ENCODE measurements at regions of chrX and their contacts with region 1.

Region 1: DNA sequence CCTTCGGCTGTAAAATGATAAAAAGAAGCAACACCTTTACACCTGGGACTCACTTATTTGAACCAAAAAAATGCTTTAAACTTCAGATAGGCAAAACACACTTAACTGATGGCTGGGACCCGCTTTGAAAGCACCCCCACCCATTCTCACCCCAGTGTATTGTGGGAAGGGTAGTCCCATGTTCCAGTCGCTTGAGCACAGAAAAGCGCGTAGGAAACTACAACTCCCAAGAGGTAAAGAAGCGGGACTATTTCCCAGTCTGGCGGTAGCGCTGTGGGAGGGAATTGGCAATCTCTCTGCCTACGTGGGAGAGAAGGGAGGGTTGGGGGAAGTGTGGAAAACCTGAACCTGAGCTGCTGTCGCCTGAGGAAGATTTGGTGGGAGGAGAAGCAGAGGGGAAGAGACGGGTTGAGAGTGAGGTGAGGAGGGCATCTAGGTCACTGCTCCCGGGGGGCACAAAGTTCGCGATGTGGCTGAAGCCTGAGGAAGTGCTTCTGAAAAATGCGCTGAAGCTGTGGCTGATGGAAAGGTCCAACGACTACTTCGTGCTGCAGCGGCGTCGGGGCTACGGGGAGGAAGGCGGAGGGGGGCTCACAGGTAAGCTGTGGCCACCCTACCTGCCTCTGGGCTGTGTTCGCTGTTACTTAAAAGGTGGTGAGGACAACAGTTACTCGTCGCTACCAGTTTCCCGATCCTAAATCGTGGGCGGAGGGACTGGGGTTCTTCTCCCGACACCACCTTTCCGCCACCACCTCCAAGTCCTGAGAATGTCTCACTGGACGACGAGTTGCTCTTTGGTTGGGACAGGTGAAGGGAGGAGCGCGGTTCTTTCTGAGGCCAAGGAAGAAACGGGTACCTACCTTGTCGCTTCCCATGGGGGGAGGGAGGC is at the start of gene TBC1D8B:
- DNase-seq: peak; percentile 89
- H3K4me3 ChIP-seq: peak within 1 kb of the TSS; percentile 44 to 67 (median 61)
- H3K27ac ChIP-seq: peak within 1 kb of the TSS; percentile 40 to 56 (median 48)
- H3K4me1 ChIP-seq: no peaks in the 10 kb centered on the region
- H3K27me3 ChIP-seq: no peaks in the 10 kb centered on the region
- CTCF ChIP-seq: no peak
- EP300 ChIP-seq: no peak
- POLR2A ChIP-seq: no peak
- total RNA-seq, gene TBC1D8B: 4.5 to 9.4 (median 5.7) TPM

Region 2: DNA sequence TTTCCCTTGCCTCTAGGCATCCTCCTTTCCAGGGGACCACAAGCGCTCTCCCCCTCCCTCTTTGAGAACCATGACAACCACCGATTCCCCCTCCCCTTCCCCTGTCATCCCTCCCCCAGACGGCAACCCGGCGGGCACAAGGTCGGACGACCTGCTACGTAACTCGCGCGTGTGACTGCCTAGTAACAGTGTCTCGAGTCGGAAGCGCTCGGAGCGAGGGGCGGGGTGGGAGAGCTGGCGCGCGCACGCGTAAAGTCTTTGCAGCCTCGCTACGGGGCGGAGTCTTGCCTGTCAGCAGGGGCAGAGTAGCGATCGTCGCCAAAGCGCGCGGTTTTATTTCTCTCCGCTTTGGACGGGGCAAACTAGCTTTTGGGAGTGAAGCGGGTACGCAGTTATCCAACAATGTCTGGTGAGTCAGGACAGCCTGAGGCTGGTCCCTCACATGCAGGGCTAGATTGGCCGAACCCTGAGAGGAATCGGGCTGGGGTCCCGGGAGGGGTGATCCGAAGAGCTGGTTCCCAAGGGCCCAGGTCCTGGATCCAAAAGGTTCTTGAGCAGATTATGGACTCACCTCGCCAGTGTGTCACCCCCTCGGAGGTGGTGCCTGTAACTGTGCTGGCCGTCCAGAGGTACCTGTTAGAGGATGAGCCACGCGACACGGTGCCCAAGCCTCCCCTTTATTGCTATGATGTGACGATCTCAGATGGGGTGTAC is 190.8 kb before region 1 on chrX and contains the start of gene RADX:
- intact Hi-C with region 1: loop called (anchors 5 kb)
- DNase-seq: peak; percentile 88
- H3K4me3 ChIP-seq: peak within 1 kb of the TSS; percentile 33 to 57 (median 52)
- H3K27ac ChIP-seq: peak within 1 kb of the TSS in 3 of 4 donors; percentile 42 to 48 (median 45)
- H3K4me1 ChIP-seq: peaks cover 0 to 4% (median 0%) of the 10 kb centered on the region in 4 donors
- H3K27me3 ChIP-seq: no peaks in the 10 kb centered on the region
- CTCF ChIP-seq: no peak
- EP300 ChIP-seq: no peak
- POLR2A ChIP-seq: no peak
- total RNA-seq, gene RADX: 1.1 to 7.3 (median 3.4) TPM

Region 3: DNA sequence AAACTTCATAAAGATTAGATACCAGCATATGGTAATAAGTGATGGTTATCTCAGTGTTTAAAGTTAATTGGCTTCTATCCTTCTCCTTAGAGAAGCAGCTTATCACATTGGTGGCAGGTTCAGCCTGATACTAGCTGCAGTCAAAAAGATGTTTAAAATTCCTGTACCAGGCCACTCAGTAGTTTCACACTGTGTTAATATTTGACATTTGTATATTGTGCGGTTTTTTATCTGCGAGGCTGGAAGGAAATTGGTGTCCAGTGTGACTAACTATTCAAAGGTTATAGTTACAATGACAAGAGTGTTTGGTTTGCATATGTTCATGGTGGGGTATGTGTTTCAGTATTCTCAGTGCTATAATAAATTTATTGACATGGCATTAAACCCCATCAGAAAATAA is 27.6 kb before region 1 on chrX:
- intact Hi-C with region 1: no loop called
- DNase-seq: no peak
- H3K4me3 ChIP-seq: no peak overlapping the region
- H3K27ac ChIP-seq: no peak overlapping the region
- H3K4me1 ChIP-seq: no peaks in the 10 kb centered on the region
- H3K27me3 ChIP-seq: no peaks in the 10 kb centered on the region
- CTCF ChIP-seq: no peak
- EP300 ChIP-seq: no peak
- POLR2A ChIP-seq: no peak

Region 4: DNA sequence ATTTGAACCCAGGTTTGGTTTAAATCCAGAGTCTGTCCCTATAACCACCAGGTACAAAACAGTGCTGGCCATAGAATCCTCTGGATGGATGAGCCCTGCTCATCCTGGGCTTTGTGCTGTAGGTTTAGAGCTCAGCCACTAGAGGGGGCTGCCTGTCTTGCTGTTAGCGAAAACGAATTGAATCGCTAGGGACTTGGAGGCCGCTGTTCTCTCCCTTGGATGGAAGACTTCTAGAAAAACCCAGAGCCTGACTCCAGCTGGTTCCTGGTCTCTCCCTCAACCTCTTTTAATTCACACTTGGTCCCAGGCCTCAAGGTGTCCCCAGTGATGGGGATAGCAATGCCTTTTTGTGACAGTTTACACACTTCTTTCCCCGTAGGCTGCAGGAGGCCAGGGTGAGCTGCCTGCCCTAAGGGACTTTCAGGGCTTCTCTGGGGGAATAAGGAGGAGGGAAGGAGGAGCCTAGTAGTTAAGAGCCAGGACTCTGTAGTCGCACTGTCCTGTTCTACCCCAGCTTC is 91.8 kb after region 1 on chrX:
- intact Hi-C with region 1: no loop called
- DNase-seq: peak; percentile 78
- H3K4me3 ChIP-seq: no peak overlapping the region
- H3K27ac ChIP-seq: no peak overlapping the region
- H3K4me1 ChIP-seq: peaks cover 0 to 3% (median 0%) of the 10 kb centered on the region in 4 donors
- H3K27me3 ChIP-seq: no peaks in the 10 kb centered on the region
- CTCF ChIP-seq: peak; percentile 30 to 62 (median 48)
- EP300 ChIP-seq: no peak
- POLR2A ChIP-seq: no peak